Endothelial cell of umbilical vein (primary cell): ENCODE measurements at regions of chr7 and their contacts with region 1.

Region 1: DNA sequence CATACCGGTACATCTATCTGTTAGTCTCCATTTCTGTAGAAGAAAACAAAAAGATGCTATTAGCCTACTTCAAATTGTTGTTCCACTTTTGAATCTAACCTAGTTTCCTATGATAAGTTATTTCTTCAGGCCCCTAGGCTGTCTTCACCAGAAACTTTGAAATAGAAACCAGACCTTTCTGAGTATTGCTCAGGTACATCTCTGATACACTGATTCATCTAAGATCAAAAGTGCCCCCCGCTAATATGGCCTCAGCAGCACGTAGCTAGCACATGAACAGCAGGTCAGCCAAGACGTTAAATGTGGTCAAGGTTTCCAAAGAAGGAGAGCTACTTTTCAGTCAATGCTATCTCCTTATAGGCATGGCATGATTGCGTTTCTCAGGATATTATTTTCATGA is 23.6 kb downstream of the CTAGE6 start:
- DNase-seq: no peak
- H3K4me3 ChIP-seq: no peak overlapping the region
- H3K27ac ChIP-seq: no peak overlapping the region
- H3K4me1 ChIP-seq: no peaks in the 10 kb centered on the region
- H3K27me3 ChIP-seq: no peaks in the 10 kb centered on the region
- CTCF ChIP-seq: no peak
- POLR2A ChIP-seq: no peak

Region 2: GRCh38 chr7:143892527-143893300 is 158.8 kb after region 1 on chr7:
- CTCF ChIA-PET with region 1: interaction called, 43 read pairs
- POLR2A ChIA-PET with region 1: no interaction called
- dilution Hi-C with region 1: no loop called
- intact Hi-C with region 1: no loop called
- DNase-seq: peak; percentile 61
- H3K4me3 ChIP-seq: no peak overlapping the region
- H3K27ac ChIP-seq: no peak overlapping the region
- H3K4me1 ChIP-seq: peaks cover 15% of the 10 kb centered on the region
- H3K27me3 ChIP-seq: no peaks in the 10 kb centered on the region
- CTCF ChIP-seq: peak; percentile 36 to 46
- POLR2A ChIP-seq: no peak

Region 3: GRCh38 chr7:144027070-144027469 is 293.2 kb after region 1 on chr7:
- CTCF ChIA-PET with region 1: interaction called, 39 read pairs
- POLR2A ChIA-PET with region 1: no interaction called
- dilution Hi-C with region 1: no loop called
- intact Hi-C with region 1: no loop called
- DNase-seq: peak; percentile 37
- H3K4me3 ChIP-seq: no peak overlapping the region
- H3K27ac ChIP-seq: no peak overlapping the region
- H3K4me1 ChIP-seq: no peaks in the 10 kb centered on the region
- H3K27me3 ChIP-seq: no peaks in the 10 kb centered on the region
- CTCF ChIP-seq: peak; percentile 12 to 30
- POLR2A ChIP-seq: no peak